Activated naive CD8-positive, alpha-beta T cell treated with anti-CD3 and anti-CD28 coated beads, Interleukin-2, amount 10 ng/mL, durations not matched to agents 7 days and 5 days (primary cell): ENCODE measurements at regions of chr1 and their contacts with region 1.

Region 1: DNA sequence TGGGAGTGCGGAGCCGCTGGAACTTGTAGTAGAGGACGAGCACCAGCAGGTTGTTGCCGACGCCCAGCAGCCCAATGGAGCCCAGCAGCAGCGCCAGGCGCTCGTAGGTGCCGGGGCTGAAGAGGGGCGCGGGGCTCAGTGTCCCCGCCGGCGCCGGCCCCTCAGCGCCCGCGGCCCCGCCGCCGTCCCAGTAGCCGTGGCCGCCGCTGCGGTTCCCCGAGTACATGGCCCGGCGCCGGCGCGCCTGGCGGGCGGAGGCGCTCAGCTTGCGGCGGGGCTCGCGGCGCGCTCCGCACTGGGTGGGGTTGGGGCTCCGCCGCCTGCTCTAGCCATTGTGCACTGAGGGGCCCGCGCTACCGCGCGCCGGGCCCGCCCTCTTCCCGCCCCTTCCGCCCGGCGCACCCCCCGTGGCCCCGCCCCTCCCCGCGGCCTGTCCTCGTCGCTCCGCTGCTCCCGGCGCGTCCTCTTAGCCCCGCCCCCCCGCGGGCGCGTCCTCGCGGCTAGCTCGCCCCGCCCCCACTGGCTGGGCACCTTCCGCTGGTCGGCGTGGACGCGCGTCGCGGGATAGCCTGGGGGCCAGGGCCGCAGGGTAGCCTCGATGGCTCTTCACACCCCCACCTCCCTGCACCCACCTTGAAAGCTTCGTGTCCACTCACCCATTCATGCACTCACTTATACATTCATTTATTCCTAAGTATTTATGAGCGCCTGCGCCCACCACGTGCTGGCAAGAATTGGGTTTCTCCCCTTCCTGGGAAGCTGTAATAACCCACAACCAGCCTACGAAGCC is at the starts of genes CHML and OPN3:
- DNase-seq: peak; percentile 99
- ATAC-seq: peak; percentile 97
- H3K4me3 Mint-ChIP-seq: peak within 1 kb of the TSS; percentile 95
- H3K27ac Mint-ChIP-seq: peak within 1 kb of the TSS; percentile 93
- H3K4me1 Mint-ChIP-seq: peaks cover 29% of the 10 kb centered on the region
- H3K27me3 Mint-ChIP-seq: no peaks in the 10 kb centered on the region
- total RNA-seq, gene CHML: 11.6 to 13.7 TPM
- total RNA-seq, gene OPN3: 12.1 to 12.8 TPM

Region 2: DNA sequence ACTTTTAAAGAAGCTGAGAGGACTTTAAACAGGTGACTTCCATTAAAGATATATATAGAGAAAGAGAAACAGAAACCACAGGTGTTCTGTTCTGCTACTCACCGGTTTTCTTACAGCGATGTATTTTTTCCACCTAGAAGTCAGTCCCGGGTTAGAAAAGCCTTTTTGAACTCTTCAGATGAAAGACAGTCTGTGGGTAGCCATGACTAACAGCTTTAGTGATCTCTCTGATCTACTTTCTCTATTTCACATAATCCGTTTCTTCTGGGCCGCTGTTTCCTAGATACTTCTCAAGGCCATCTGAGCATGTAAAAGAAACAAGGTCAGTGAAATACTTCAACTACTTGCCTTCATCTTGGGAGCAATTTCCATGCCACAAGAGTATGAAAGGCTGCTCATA is 37.0 kb after region 1 on chr1:
- POLR2A ChIA-PET with region 1: interaction called, 21 read pairs
- DNase-seq: no peak
- ATAC-seq: peak; percentile 98
- H3K4me3 Mint-ChIP-seq: peak overlapping the region; percentile 86
- H3K27ac Mint-ChIP-seq: peak overlapping the region; percentile 94
- H3K4me1 Mint-ChIP-seq: peaks cover 21% of the 10 kb centered on the region
- H3K27me3 Mint-ChIP-seq: no peaks in the 10 kb centered on the region

Region 3: GRCh38 chr1:241847796-241848685 is 207.8 kb after region 1 on chr1 and contains the start of gene EXO1:
- POLR2A ChIA-PET with region 1: interaction called, 11 read pairs
- DNase-seq: peak; percentile 93
- ATAC-seq: peak; percentile 96
- H3K4me3 Mint-ChIP-seq: peak within 1 kb of the TSS; percentile 97
- H3K27ac Mint-ChIP-seq: peak within 1 kb of the TSS; percentile 99
- H3K4me1 Mint-ChIP-seq: peaks cover 23% of the 10 kb centered on the region
- H3K27me3 Mint-ChIP-seq: no peaks in the 10 kb centered on the region
- total RNA-seq, gene EXO1: 29.0 to 32.7 TPM